HEK293 (cell line): ENCODE measurements at regions of chr10 and their contacts with region 1.

Region 1: GRCh38 chr10:80444646-80445319 is 9.3 kb upstream of the TSPAN14 start:
- H3K4me3 ChIP-seq: no peak overlapping the region
- H3K27ac ChIP-seq: no peak overlapping the region
- H3K4me1 ChIP-seq: no peaks in the 10 kb centered on the region
- CTCF ChIP-seq: peak; percentile 90

Region 2: DNA sequence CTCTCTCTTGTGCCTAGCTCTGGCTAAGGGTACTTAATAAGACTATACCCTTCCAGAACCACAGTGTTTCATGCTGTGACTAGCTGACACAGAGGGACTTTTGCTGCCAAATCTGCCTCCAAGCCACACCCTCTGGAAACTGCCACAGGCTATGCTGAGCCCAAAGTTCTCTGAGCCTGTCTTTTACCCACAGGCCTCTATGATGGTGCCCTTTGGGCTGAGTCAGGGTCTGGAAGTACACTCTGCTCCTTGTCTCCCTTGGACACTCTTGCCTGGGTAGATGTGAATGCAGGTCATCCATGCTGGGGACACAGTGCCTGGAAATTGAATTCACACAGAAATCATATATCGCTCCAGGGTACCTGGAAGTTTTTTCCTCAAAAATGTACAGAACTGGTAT is 110.8 kb before region 1 on chr10:
- CTCF ChIA-PET with region 1: no interaction called
- POLR2A ChIA-PET with region 1: no interaction called
- H3K4me3 ChIP-seq: no peak overlapping the region
- H3K27ac ChIP-seq: no peak overlapping the region
- H3K4me1 ChIP-seq: no peaks in the 10 kb centered on the region
- CTCF ChIP-seq: no peak

Region 3: GRCh38 chr10:80382989-80383388 is 61.8 kb before region 1 on chr10:
- CTCF ChIA-PET with region 1: interaction called, 26 read pairs
- POLR2A ChIA-PET with region 1: no interaction called
- H3K4me3 ChIP-seq: no peak overlapping the region
- H3K27ac ChIP-seq: no peak overlapping the region
- H3K4me1 ChIP-seq: no peaks in the 10 kb centered on the region
- CTCF ChIP-seq: peak; percentile 72

Region 4: GRCh38 chr10:80509403-80510161 is 64.8 kb after region 1 on chr10:
- CTCF ChIA-PET with region 1: interaction called, 75 read pairs
- POLR2A ChIA-PET with region 1: interaction called, 6 read pairs
- H3K4me3 ChIP-seq: no peak overlapping the region
- H3K27ac ChIP-seq: no peak overlapping the region
- H3K4me1 ChIP-seq: no peaks in the 10 kb centered on the region
- CTCF ChIP-seq: no peak

Region 5: GRCh38 chr10:80924063-80924952 is 479.5 kb after region 1 on chr10:
- CTCF ChIA-PET with region 1: interaction called, 19 read pairs
- POLR2A ChIA-PET with region 1: no interaction called
- H3K4me3 ChIP-seq: no peak overlapping the region
- H3K27ac ChIP-seq: no peak overlapping the region
- H3K4me1 ChIP-seq: no peaks in the 10 kb centered on the region
- CTCF ChIP-seq: no peak